Transverse colon (tissue), 4 donors: ENCODE measurements at regions of chr9 and their contacts with region 1.

Region 1: DNA sequence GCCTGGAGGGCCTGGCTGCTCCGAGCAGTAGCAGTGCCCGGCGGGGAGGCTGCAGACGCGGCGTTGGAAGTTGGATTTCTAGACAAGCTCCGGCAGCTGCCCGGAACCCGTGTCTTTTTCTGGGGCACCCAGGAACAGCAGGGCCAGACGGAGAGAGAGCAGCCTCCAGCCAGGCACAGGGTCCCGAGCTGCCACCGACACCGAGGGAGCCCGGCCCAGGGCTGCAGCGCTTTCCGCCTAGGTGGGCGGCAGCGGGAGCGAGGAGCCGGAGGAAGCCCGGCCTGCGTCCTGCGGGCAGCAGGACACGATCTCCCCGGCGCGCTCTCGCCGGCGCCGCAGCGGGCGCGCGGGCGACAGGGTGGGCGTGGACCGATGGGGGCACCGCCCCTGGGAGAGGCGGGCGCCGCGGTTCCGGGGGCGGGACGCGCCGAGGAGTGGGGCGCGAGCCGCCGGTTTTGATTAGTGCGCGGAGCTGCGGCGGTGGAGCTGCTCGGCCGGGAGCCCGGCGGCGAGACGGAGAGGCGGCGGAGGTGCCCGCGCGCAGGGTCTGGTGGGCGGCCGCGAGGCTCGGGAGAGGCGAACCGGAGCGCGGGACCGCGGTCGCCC is at the start of gene UGCG:
- DNase-seq: peak; percentile 92
- H3K4me3 ChIP-seq: peak within 1 kb of the TSS; percentile 74 to 89 (median 82)
- H3K27ac ChIP-seq: peak within 1 kb of the TSS; percentile 93 to 98 (median 96)
- H3K4me1 ChIP-seq: peaks cover 16 to 54% (median 43%) of the 10 kb centered on the region in 4 donors
- H3K27me3 ChIP-seq: no peaks in the 10 kb centered on the region
- CTCF ChIP-seq: peak in 1 of 5 experiments; percentile 15
- EP300 ChIP-seq: no peak
- POLR2A ChIP-seq: peak; percentile 97
- total RNA-seq, gene UGCG: 3.8 to 62.6 (median 29.9) TPM

Region 2: DNA sequence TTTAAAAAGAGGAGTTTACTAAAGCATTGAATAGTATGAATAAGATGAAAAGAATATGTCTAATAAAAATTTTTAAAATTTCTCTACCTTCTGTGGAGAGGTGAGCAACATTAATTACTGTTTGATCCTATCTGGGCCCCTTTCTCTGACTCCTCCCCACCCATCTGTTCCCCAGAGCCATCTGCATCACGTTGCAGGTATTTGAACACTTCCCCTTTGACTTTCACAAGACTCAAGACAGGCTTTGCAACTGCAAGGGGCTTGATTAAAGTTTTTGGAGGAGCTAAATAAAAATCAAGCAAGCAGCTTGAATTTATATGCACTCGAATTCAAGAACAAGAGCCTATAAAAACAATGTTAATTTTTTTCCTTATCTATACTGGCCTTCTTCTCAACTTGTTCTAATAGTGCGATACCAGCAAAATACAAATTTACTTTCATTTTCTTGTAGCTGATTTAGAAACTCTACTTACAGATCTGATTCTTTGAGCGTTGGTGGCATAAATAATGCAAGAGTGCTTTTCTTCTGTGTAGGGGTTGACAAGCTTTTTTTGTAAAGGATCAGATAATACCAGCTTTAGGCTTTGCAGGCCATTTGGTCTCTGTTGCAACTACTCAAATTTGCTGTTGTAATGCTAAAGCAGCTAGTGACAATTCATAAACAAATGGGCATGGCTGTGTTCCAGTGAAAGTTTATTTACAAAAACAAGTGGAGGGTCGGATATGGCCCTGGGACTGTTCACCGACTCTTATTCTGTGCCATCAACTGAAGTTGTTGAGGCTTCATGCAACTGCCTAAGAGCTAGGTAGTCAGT is 1580.0 kb before region 1 on chr9:
- in situ Hi-C with region 1: no loop called
- intact Hi-C with region 1: no loop called
- DNase-seq: no peak
- H3K4me3 ChIP-seq: peak overlapping the region in 1 of 4 donors; percentile 16
- H3K27ac ChIP-seq: peak overlapping the region in 1 of 4 donors; percentile 41
- H3K4me1 ChIP-seq: no peaks in the 10 kb centered on the region
- H3K27me3 ChIP-seq: no peaks in the 10 kb centered on the region
- CTCF ChIP-seq: no peak
- EP300 ChIP-seq: no peak
- POLR2A ChIP-seq: no peak

Region 3: DNA sequence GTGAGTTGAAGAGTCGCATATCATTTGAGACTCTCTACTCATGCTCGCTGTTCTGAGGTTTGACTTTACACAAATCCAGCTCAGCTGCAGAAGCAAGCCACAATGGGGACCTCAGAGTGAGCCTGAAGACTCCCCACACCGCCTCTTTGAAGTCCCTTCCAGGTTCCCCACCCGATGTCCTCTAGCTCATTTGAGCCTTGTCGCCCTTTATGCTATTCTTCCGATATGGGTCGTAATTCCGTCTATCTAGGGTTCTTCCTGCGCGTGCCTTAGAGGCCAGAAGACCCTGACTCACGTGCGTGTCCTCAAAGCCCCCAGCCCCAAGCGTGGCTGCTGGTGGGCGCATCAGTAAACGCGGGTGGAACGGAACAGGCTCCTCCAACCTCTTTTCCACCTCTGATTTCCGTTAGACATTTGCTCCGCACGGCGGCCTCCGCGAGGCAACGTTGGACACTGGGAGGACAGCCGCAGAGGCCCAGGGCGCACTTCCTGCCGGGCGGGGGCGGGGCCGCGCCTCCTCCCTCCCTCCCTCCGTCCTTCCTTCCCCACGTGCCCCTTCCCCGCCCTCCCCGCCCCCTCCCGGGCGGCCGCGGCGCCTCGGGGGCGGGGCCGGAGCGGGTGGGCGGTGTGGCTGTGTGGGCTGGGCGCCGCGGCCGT is 853.8 kb after region 1 on chr9 and contains the start of gene SNX30:
- in situ Hi-C with region 1: no loop called
- intact Hi-C with region 1: loop called (anchors 2 kb)
- DNase-seq: peak; percentile 94
- H3K4me3 ChIP-seq: peak within 1 kb of the TSS; percentile 75 to 100 (median 86)
- H3K27ac ChIP-seq: peak within 1 kb of the TSS; percentile 85 to 94 (median 89)
- H3K4me1 ChIP-seq: peaks cover 16 to 47% (median 38%) of the 10 kb centered on the region in 4 donors
- H3K27me3 ChIP-seq: no peaks in the 10 kb centered on the region
- CTCF ChIP-seq: peak in 2 of 5 experiments; percentile 18 to 20
- EP300 ChIP-seq: no peak
- POLR2A ChIP-seq: peak; percentile 84
- total RNA-seq, gene SNX30: 15.7 to 46.4 (median 45.7) TPM